ENCODE measurements at regions of chr5 and their contacts with region 1.

Region 1: DNA sequence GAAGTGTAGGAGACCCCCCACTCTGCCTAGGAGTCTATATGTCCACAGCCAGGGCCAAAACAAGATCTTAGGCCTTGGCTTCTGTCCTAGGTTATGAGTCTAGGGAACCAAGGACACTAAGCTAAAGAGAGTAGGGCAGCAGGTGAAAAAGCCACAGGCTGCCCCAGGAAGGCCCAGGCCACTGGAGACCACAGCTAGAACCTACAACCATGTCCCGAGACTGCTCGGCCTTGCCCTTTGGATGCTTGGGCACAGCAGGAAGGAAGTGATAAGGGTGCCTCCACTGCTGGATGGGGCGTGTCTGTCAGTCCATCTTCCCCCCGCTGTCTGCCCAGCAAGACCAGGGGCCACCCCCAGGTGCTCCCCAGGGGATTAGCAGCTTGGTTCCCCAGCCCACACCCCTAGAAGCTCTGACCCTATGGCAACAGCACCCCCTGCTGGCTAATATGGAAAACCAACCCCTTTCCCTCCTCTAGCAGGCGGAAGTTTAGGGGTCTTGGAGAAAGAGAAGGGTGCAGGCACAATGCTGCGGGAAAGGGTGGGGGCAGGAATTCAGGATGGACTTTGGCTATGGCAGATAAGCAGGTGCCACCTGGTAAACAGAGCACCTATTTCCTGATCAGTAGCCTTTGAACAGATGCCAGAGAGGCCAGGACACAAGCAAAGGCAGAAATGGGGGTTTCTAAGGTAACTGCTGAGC is 10.5 kb upstream of the IRF1 start:
- DNase-seq: no peak
- ATAC-seq: no peak
- H3K4me3 ChIP-seq: no peak overlapping the region
- H3K27ac ChIP-seq: no peak overlapping the region; the same call in 1 of the 2 replicates
- H3K4me1 ChIP-seq: peaks cover 15 to 64% of the 10 kb centered on the region in 2 experiments
- H3K27me3 ChIP-seq: no peaks in the 10 kb centered on the region
- CTCF ChIP-seq: peak in 2 of 3 experiments; percentile 78 to 96; a peak in 4 of 6 replicates
- POLR2A ChIP-seq: no peak
- RAD21 ChIP-seq: no peak

Region 2: GRCh38 chr5:132419502-132420468 is 81.3 kb before region 1 on chr5:
- CTCF ChIA-PET with region 1: interaction called, 8 read pairs
- POLR2A ChIA-PET with region 1: interaction called, 3 read pairs
- RAD21 ChIA-PET with region 1: interaction called in 1 of 2 experiments, 4 read pairs
- intact Hi-C with region 1: loop called (anchors 1 kb)
- DNase-seq: peak; percentile 56
- ATAC-seq: peak; percentile 86
- H3K4me3 ChIP-seq: no peak overlapping the region
- H3K27ac ChIP-seq: no peak overlapping the region
- H3K4me1 ChIP-seq: peaks cover 31 to 87% of the 10 kb centered on the region in 2 experiments
- H3K27me3 ChIP-seq: no peaks in the 10 kb centered on the region
- CTCF ChIP-seq: peak in 2 of 3 experiments; percentile 80 to 90; a peak in 4 of 6 replicates
- POLR2A ChIP-seq: no peak
- RAD21 ChIP-seq: no peak

Measured in HCT116 (cell line).